Caco-2 (cell line): ENCODE measurements at regions of chr21 and their contacts with region 1.

Region 1: DNA sequence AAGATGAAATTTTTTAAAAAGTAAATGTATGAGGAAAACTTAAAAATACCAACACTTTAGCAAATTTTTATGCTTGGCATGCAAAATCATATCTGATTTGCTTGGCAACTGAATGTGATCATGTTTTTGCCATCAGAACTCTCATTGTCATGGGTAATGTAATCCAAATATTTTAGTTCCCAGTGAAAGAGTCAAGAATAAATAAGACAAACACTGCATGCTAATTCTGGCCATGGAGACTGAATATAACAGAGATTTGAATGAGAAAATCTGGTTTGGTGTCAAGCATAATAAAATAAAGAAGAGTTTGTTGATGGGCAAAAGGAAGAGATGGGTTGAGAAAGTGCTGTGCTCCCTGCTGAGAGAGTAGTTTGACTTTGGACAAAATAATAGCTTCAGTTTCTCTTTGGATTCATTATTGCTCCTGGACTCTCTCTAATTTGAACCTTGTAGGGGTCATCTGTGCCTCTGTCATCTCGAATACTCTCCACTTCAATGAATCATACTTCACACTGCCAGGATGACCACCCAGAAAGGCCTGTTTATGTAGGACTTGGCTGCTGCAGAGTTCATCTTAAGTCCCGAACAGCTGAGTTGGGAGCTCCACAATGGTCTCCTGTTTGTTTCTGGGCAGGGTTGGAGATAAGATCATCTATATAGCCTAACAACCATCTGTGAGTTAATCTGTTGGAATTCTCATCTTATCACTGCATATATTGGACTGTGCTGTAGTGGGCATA is 34.4 kb downstream of the ADAMTS1 start:
- DNase-seq: no peak
- H3K4me3 ChIP-seq: no peak overlapping the region
- H3K4me3 Mint-ChIP-seq: no peak overlapping the region
- H3K27ac Mint-ChIP-seq: no peak overlapping the region
- H3K4me1 ChIP-seq: peaks cover 8% of the 10 kb centered on the region; the same call in 1 of the 2 replicates
- H3K4me1 Mint-ChIP-seq: peaks cover 23% of the 10 kb centered on the region
- H3K27me3 ChIP-seq: no peaks in the 10 kb centered on the region
- H3K27me3 Mint-ChIP-seq: no peaks in the 10 kb centered on the region
- CTCF ChIP-seq: no peak

Region 2: DNA sequence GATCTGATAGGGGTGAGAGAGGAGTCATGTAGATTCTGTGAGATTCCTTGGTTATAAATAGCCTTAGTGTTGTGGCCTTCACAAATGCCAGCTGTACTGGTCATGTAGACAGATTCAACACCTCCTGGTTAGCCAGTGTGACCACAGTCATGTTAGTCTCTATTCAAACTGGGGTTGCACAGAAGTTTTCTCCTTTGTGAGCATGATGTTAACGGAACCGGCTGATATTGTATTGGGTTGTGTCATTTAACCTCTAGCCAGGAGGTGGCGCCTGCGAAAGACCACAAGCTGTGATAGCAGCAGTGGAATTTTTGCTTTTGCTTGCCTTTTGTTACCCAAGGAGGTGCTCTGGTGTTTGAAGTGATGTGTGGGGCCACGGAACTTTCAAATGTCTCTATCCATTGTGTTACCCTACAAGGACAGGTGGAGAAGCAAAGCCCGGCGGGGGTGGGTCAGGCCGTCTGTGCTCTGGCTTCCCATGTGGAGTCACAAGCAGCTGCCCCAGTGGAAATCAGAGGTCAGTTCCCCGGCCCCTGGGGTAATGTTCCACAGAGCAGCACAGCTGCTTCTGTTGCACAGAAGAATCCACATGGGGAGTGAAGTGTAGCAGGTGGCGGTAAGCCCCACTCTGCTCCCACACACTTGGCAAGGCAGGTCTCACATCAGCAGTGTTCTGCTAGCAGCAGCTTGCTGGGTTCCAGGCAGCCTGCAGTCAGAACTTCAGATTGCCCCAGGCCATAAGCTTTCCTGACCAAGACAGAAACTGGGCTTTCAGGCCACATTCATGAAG is 78.2 kb before region 1 on chr21:
- CTCF ChIA-PET with region 1: interaction called, 3 read pairs
- POLR2A ChIA-PET with region 1: no interaction called
- intact Hi-C with region 1: loop called (anchors 10 kb)
- DNase-seq: peak in 1 of 2 experiments; percentile 43
- H3K4me3 ChIP-seq: no peak overlapping the region
- H3K4me3 Mint-ChIP-seq: no peak overlapping the region
- H3K27ac Mint-ChIP-seq: no peak overlapping the region
- H3K4me1 ChIP-seq: 0 out of 2 replicates have a peak, but pooled peaks cover 3% of the 10 kb centered on the region
- H3K4me1 Mint-ChIP-seq: no peaks in the 10 kb centered on the region
- H3K27me3 ChIP-seq: no peaks in the 10 kb centered on the region
- H3K27me3 Mint-ChIP-seq: no peaks in the 10 kb centered on the region
- CTCF ChIP-seq: peak; percentile 31 to 43

Region 3: DNA sequence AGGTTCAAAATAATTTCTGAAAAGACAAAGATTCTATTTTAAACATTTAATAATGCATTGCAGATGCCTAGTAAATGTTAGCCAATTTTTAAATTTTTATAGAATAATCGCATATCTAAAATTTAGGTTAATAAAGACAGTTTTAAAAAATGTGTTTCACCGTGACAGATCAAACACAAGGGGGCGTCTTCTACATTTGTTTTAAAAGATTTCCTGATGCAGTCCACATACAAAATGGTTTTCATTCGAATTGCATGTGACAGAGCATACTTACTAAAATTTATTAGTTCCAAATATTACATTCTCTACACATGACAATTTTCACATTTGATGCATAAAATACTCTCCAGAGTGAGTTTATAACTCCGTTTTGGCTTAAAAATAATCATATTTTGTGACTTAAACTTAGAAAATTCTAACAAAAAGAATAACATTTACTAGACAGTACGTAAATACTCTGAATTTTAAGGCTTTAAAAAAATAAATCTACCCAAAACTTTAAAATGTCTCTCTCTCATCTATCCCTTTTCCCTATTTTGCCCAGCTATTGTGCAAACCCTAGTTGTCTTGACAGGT is 41.1 kb before region 1 on chr21:
- CTCF ChIA-PET with region 1: no interaction called
- POLR2A ChIA-PET with region 1: no interaction called
- intact Hi-C with region 1: no loop called
- DNase-seq: no peak
- H3K4me3 ChIP-seq: no peak overlapping the region
- H3K4me3 Mint-ChIP-seq: no peak overlapping the region
- H3K27ac Mint-ChIP-seq: no peak overlapping the region
- H3K4me1 ChIP-seq: no peaks in the 10 kb centered on the region
- H3K4me1 Mint-ChIP-seq: peaks cover 11% of the 10 kb centered on the region
- H3K27me3 ChIP-seq: no peaks in the 10 kb centered on the region
- H3K27me3 Mint-ChIP-seq: no peaks in the 10 kb centered on the region
- CTCF ChIP-seq: peak in 1 of 2 experiments; percentile 18

Region 4: GRCh38 chr21:26850108-26850643 is 39.3 kb after region 1 on chr21:
- CTCF ChIA-PET with region 1: no interaction called
- POLR2A ChIA-PET with region 1: no interaction called
- intact Hi-C with region 1: no loop called
- DNase-seq: peak in 1 of 2 experiments; percentile 28
- H3K4me3 ChIP-seq: no peak overlapping the region
- H3K4me3 Mint-ChIP-seq: no peak overlapping the region
- H3K27ac Mint-ChIP-seq: no peak overlapping the region
- H3K4me1 ChIP-seq: no peaks in the 10 kb centered on the region
- H3K4me1 Mint-ChIP-seq: peaks cover 6% of the 10 kb centered on the region
- H3K27me3 ChIP-seq: no peaks in the 10 kb centered on the region
- H3K27me3 Mint-ChIP-seq: no peaks in the 10 kb centered on the region
- CTCF ChIP-seq: peak; percentile 23 to 71

Region 5: DNA sequence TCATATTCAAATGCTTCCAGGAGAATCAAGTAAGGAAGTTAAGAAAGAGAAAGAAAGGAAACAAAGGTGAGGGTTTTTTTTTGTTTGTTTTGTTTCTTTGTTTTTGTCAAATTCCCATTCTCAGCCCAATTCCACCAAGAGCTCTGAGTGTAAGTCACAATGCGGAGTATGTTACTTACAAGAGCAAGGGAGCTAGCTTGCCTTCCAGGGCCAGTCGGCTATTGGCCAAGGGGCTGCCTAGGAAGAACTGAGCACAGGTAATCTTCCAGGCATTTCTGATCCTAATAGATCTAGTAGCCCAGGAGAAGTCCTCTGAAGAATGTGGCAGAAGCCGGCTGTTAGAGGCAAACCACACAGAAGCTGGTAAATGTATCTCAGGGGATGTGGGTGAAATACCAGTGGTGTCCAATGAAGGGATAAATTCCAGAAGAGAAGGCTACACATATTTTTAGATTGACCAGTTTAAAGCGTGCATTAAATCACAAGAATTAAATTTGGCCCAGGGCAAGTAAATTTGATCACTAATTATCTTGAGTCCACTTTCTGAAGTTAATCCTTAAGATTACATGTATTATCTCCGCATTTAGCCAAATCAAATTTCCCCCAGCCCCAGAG is 395.6 kb after region 1 on chr21:
- CTCF ChIA-PET with region 1: no interaction called
- POLR2A ChIA-PET with region 1: no interaction called
- intact Hi-C with region 1: no loop called
- DNase-seq: no peak
- H3K4me3 ChIP-seq: no peak overlapping the region
- H3K4me3 Mint-ChIP-seq: no peak overlapping the region
- H3K27ac Mint-ChIP-seq: no peak overlapping the region
- H3K4me1 ChIP-seq: no peaks in the 10 kb centered on the region
- H3K4me1 Mint-ChIP-seq: no peaks in the 10 kb centered on the region
- H3K27me3 ChIP-seq: no peaks in the 10 kb centered on the region
- H3K27me3 Mint-ChIP-seq: peaks cover 4% of the 10 kb centered on the region
- CTCF ChIP-seq: no peak